H1 (cell line): ENCODE measurements at regions of chr17 and their contacts with region 1.

Region 1: GRCh38 chr17:7687908-7688807 is at the start of gene WRAP53:
- DNase-seq: peak; percentile 95 to 99
- H3K4me3 ChIP-seq: peak within 1 kb of the TSS; percentile 75 to 100 (median 94)
- H3K27ac ChIP-seq: peak within 1 kb of the TSS; percentile 99
- H3K4me1 ChIP-seq: peaks cover 0 to 11% (median 4%) of the 10 kb centered on the region in 4 experiments; a peak in 4 of 7 replicates
- H3K27me3 ChIP-seq: no peaks in the 10 kb centered on the region
- CTCF ChIP-seq: peak; percentile 91 to 99 (median 93)
- EP300 ChIP-seq: no peak
- POLR2A ChIP-seq: peak in 1 of 2 experiments; percentile 77; a peak in 2 of 3 replicates
- RAD21 ChIP-seq: peak; percentile 83 to 85
- total RNA-seq, gene WRAP53: 29.3 and 30.1 TPM in 2 replicates

Region 2: DNA sequence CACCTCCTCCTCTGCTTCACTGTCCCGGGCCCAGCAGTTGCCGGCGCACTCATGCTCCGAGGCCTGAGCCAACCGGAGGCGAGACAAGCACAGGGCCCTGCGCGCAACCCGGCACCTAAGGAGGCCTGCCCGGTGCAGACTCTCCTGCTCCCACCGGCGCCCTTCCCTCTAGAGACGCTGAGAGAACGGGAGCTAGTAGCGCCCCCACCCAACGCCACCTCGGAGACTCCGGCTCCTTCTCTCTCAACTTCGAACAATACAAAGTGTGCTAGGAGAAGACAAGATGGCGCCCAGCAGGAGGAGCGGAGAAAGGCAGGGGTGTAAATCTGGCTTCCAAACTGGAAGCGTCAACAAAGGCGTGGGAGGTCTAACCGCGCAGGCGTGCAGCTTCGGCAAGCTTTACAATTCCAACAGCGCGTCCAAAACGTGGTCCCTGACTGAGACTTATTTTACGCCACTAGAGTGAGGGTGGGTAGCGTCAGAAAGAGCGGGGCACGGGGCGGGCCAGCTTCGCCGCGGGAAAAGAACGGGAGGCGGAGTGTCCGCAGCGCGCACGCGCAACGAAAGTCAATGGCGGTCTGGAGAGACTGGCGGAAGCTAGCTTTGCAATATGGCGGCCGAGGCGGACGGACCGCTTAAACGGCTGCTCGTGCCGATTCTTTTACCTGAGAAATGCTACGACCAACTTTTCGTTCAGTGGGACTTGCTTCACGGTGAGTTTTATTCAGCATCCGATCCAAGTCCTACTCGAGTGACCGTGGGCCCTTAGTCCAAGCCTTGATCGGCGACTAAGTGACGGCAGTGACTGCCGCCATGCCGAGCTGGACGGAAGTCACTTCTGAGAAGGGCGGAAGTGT is 104.7 kb before region 1 on chr17 and contains the start of gene MPDU1:
- CTCF ChIA-PET with region 1: interaction called, 22 read pairs
- POLR2A ChIA-PET with region 1: interaction called, 135 read pairs
- DNase-seq: peak in 1 of 2 experiments; percentile 95
- H3K4me3 ChIP-seq: peak within 1 kb of the TSS; percentile 47 to 95 (median 70)
- H3K27ac ChIP-seq: peak within 1 kb of the TSS; percentile 98
- H3K4me1 ChIP-seq: peaks cover 0 to 19% (median 4%) of the 10 kb centered on the region in 4 experiments; a peak in 6 of 7 replicates
- H3K27me3 ChIP-seq: no peaks in the 10 kb centered on the region
- CTCF ChIP-seq: no peak
- EP300 ChIP-seq: no peak
- POLR2A ChIP-seq: peak; percentile 75 to 94
- RAD21 ChIP-seq: no peak
- total RNA-seq, gene MPDU1: 63.2 and 66.9 TPM in 2 replicates

Region 3: GRCh38 chr17:7627250-7628121 is 60.7 kb before region 1 on chr17 and contains the start of gene SAT2:
- CTCF ChIA-PET with region 1: interaction called, 199 read pairs
- POLR2A ChIA-PET with region 1: interaction called, 2,272 read pairs
- DNase-seq: peak; percentile 87 to 100
- H3K4me3 ChIP-seq: peak within 1 kb of the TSS; percentile 72 to 98 (median 76)
- H3K27ac ChIP-seq: peak within 1 kb of the TSS; percentile 16; the same call in 1 of the 2 replicates
- H3K4me1 ChIP-seq: peaks cover 2 to 10% (median 4%) of the 10 kb centered on the region in 4 experiments; a peak in 5 of 7 replicates
- H3K27me3 ChIP-seq: no peaks in the 10 kb centered on the region
- CTCF ChIP-seq: no peak
- EP300 ChIP-seq: peak in 1 of 2 experiments; percentile 77; a peak in 1 of 3 replicates
- POLR2A ChIP-seq: peak in 1 of 2 experiments; percentile 75; a peak in 2 of 3 replicates
- RAD21 ChIP-seq: no peak
- total RNA-seq, gene SAT2: 72.3 and 75.3 TPM in 2 replicates

Region 4: GRCh38 chr17:7656958-7657609 is 31.1 kb before region 1 on chr17:
- CTCF ChIA-PET with region 1: interaction called, 39 read pairs
- POLR2A ChIA-PET with region 1: interaction called, 2,272 read pairs
- DNase-seq: peak; percentile 88 to 90
- H3K4me3 ChIP-seq: peak overlapping the region in 2 of 4 experiments; percentile 3 to 47; a peak in 3 of 8 replicates
- H3K27ac ChIP-seq: peak overlapping the region; percentile 38; the same call in 1 of the 2 replicates
- H3K4me1 ChIP-seq: peaks cover 7 to 16% (median 12%) of the 10 kb centered on the region in 4 experiments
- H3K27me3 ChIP-seq: peaks cover 0 to 9% (median 2%) of the 10 kb centered on the region in 4 experiments; a peak in 3 of 7 replicates
- CTCF ChIP-seq: peak in 2 of 3 experiments; percentile 9 to 29; a peak in 2 of 4 replicates
- EP300 ChIP-seq: 0 out of 3 replicates have a peak, but pooled peaks of 1 of the 2 experiments have one; percentile 67
- POLR2A ChIP-seq: peak in 1 of 2 experiments; percentile 60; a peak in 2 of 3 replicates
- RAD21 ChIP-seq: peak; percentile 6 to 32; a peak in 3 of 4 replicates

Region 5: GRCh38 chr17:7716901-7717755 is 29.0 kb after region 1 on chr17 and contains the start of gene DNAH2:
- CTCF ChIA-PET with region 1: interaction called, 86 read pairs
- POLR2A ChIA-PET with region 1: interaction called, 88 read pairs
- DNase-seq: peak; percentile 91 to 96
- H3K4me3 ChIP-seq: peak within 1 kb of the TSS; percentile 54 to 81 (median 71)
- H3K27ac ChIP-seq: no peak within 1 kb of the TSS; the same call in 1 of the 2 replicates
- H3K4me1 ChIP-seq: peaks cover 6 to 20% (median 14%) of the 10 kb centered on the region in 4 experiments
- H3K27me3 ChIP-seq: peaks cover 0 to 19% (median 7%) of the 10 kb centered on the region in 4 experiments; a peak in 3 of 7 replicates
- CTCF ChIP-seq: peak; percentile 60 to 74 (median 69)
- EP300 ChIP-seq: no peak
- POLR2A ChIP-seq: no peak
- RAD21 ChIP-seq: peak; percentile 51 to 59
- total RNA-seq, gene DNAH2: 0.13 and 0.21 TPM in 2 replicates